ENCODE measurements at regions of chr4 and their contacts with region 1.

Region 1: GRCh38 chr4:112765317-112765975 is 128.5 kb downstream of the LARP7 start:
- DNase-seq: no peak
- ATAC-seq: peak; percentile 78
- H3K4me3 Mint-ChIP-seq: peak overlapping the region; percentile 47
- H3K27ac Mint-ChIP-seq: peak overlapping the region; percentile 95
- H3K4me1 Mint-ChIP-seq: peaks cover 38% of the 10 kb centered on the region
- H3K27me3 Mint-ChIP-seq: no peaks in the 10 kb centered on the region
- CTCF ChIP-seq: peak; percentile 68

Region 2: DNA sequence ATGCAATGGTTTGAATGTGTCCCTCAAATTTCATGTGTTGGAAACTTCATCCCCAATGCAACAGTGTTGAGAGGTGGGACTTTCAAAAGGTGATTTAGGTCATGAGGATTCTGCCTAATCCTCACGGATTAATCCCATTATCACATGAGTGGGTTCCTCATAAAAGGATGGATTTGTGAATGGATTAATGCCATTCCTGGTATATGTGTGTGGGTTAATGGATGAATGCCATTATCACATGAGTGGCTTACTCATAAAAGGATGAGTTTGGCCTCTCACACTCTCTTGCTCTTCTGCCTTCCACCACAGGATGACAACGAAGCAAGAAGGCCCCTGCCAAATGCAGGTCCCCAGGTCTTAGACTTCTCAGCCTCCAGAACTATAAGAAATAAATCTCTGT is 219.0 kb before region 1 on chr4:
- CTCF ChIA-PET with region 1: no interaction called
- POLR2A ChIA-PET with region 1: no interaction called
- DNase-seq: no peak
- ATAC-seq: no peak
- H3K4me3 Mint-ChIP-seq: no peak overlapping the region
- H3K27ac Mint-ChIP-seq: no peak overlapping the region
- H3K4me1 Mint-ChIP-seq: no peaks in the 10 kb centered on the region
- H3K27me3 Mint-ChIP-seq: no peaks in the 10 kb centered on the region
- CTCF ChIP-seq: no peak

Region 3: GRCh38 chr4:112648263-112649054 is 117.0 kb before region 1 on chr4:
- CTCF ChIA-PET with region 1: interaction called, 116 read pairs
- POLR2A ChIA-PET with region 1: interaction called, 33 read pairs
- DNase-seq: peak; percentile 51
- ATAC-seq: peak; percentile 33
- H3K4me3 Mint-ChIP-seq: peak overlapping the region; percentile 94
- H3K27ac Mint-ChIP-seq: peak overlapping the region; percentile 93
- H3K4me1 Mint-ChIP-seq: peaks cover 41% of the 10 kb centered on the region
- H3K27me3 Mint-ChIP-seq: peaks cover 7% of the 10 kb centered on the region
- CTCF ChIP-seq: no peak

Region 4: GRCh38 chr4:112704991-112705845 is 60.2 kb before region 1 on chr4:
- CTCF ChIA-PET with region 1: interaction called, 25 read pairs
- POLR2A ChIA-PET with region 1: no interaction called
- DNase-seq: peak; percentile 47
- ATAC-seq: peak; percentile 29
- H3K4me3 Mint-ChIP-seq: peak overlapping the region; percentile 98
- H3K27ac Mint-ChIP-seq: peak overlapping the region; percentile 99
- H3K4me1 Mint-ChIP-seq: peaks cover 46% of the 10 kb centered on the region
- H3K27me3 Mint-ChIP-seq: no peaks in the 10 kb centered on the region; the same call in 1 of the 2 replicates
- CTCF ChIP-seq: no peak

Region 5: GRCh38 chr4:112736718-112737135 is 28.7 kb before region 1 on chr4:
- CTCF ChIA-PET with region 1: interaction called, 12 read pairs
- POLR2A ChIA-PET with region 1: no interaction called
- DNase-seq: no peak
- ATAC-seq: no peak
- H3K4me3 Mint-ChIP-seq: no peak overlapping the region
- H3K27ac Mint-ChIP-seq: peak overlapping the region; percentile 57; the same call in 1 of the 2 replicates
- H3K4me1 Mint-ChIP-seq: peaks cover 54% of the 10 kb centered on the region
- H3K27me3 Mint-ChIP-seq: no peaks in the 10 kb centered on the region
- CTCF ChIP-seq: no peak

Region 6: DNA sequence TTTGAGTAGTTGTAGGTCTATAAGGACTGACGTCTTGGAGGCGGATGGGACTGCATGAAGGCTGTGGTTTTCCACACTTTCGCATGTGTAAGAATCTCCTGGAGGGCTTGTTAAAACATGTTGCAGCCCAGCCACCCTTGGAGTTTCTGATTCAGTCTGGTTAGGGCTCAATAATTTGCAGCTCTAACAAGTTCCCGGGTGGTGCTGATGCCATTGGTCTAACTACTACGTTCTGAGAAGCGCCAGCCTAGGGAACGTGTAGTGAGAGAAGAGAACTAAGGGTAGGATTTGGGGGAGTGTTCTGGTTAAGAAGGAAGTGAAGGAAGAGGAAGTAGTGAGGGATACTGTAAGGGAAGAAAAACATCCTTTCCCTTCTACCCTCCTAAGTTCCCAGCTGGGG is 10.4 kb after region 1 on chr4:
- CTCF ChIA-PET with region 1: interaction called, 29 read pairs
- POLR2A ChIA-PET with region 1: no interaction called
- DNase-seq: no peak
- ATAC-seq: peak; percentile 71
- H3K4me3 Mint-ChIP-seq: no peak overlapping the region; the same call in 1 of the 2 replicates
- H3K27ac Mint-ChIP-seq: peak overlapping the region; percentile 94
- H3K4me1 Mint-ChIP-seq: peaks cover 22% of the 10 kb centered on the region
- H3K27me3 Mint-ChIP-seq: no peaks in the 10 kb centered on the region
- CTCF ChIP-seq: no peak

Region 7: DNA sequence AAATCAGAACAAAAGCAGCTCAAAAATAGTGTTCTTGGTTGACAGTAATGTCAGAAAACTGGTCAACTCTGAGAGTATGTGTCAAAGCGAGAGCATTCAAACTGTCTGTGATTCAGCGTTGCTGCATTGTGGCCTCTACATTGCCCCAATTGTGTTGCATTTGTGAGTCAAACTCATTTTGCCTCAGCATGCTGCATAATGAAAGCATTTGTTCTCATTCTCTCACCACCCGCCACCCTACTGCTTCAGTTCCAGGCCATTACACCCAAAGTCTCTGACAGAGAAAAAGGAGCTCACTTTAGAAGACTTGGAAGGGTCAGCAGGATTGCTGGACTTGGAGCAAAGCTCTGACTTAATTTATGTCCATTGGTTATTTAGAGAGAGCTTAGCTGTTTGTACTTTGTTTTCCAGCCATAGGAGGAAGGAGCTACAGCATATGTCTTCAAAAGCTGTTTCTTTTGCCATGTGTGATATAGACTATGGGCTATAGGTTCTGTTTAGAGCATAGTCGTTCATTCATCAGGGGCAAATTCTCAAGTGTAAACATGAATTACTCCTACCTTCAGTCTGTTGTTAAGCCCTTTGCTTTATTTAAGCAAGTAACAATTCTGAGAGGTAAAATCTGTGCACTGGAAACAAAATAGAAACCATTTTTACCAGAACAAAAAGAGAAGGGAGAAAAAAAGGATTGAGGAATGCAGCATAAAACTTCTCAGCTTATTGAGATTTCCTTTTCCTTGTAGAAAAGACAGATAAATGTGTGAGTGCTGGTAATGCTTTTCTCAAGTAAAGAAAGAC is 130.6 kb after region 1 on chr4:
- CTCF ChIA-PET with region 1: interaction called, 18 read pairs
- POLR2A ChIA-PET with region 1: no interaction called
- DNase-seq: peak; percentile 18
- ATAC-seq: peak; percentile 86
- H3K4me3 Mint-ChIP-seq: peak overlapping the region; percentile 30; the same call in 1 of the 2 replicates
- H3K27ac Mint-ChIP-seq: peak overlapping the region; percentile 93
- H3K4me1 Mint-ChIP-seq: peaks cover 68% of the 10 kb centered on the region
- H3K27me3 Mint-ChIP-seq: no peaks in the 10 kb centered on the region
- CTCF ChIP-seq: no peak

Region 8: GRCh38 chr4:112946127-112946526 is 180.7 kb after region 1 on chr4:
- CTCF ChIA-PET with region 1: interaction called, 11 read pairs
- POLR2A ChIA-PET with region 1: no interaction called
- DNase-seq: no peak
- ATAC-seq: peak; percentile 84
- H3K4me3 Mint-ChIP-seq: no peak overlapping the region
- H3K27ac Mint-ChIP-seq: no peak overlapping the region
- H3K4me1 Mint-ChIP-seq: peaks cover 6% of the 10 kb centered on the region; the same call in 1 of the 2 replicates
- H3K27me3 Mint-ChIP-seq: no peaks in the 10 kb centered on the region
- CTCF ChIP-seq: no peak